WTC11 (cell line): ENCODE measurements at regions of chr16 and their contacts with region 1.

Region 1: DNA sequence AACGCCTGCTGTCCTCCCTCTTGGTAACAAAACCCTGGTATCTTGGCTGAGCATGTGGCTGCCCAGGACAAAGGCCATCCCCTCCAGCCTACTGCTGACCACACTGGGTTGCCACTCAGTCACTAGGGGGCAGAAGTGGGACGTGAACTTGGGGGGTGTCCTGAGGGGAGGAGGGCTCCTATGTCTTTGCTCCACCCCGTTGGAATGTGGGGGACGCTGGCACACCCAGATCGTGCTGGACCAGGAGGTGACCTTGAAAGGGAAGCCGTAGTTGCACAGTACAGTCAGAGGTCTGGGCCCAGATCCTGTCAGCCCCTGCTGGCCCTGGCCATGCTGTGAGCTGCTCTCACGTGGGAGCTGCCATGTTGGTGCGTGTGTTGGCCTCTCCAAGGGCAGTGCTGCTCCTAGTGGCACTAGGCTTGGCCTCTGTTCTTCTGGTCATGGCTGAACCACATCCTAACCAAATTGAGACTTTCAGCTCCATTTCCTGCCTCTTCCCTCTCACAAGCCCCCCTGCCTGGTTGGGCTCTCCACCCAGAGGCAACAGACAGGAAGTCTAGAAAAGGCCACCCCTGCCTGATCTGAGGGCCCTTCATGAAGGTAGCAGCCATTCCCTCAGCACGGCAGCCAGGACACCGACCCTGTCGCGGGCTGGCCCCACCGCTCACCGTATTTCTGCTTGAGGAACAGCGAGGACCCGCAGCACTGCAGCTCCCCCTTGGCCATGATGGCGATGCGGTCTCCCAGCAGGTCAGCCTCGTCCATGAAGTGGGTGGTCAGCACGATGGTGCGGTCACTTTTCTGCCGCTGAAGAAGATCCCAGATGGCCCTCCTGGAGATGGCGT is 29.0 kb upstream of the RNPS1 start:
- DNase-seq: peak; percentile 74
- ATAC-seq: peak; percentile 91
- H3K4me3 Mint-ChIP-seq: no peak overlapping the region
- H3K27ac Mint-ChIP-seq: no peak overlapping the region
- H3K4me1 Mint-ChIP-seq: no peaks in the 10 kb centered on the region
- H3K27me3 Mint-ChIP-seq: no peaks in the 10 kb centered on the region
- CTCF ChIP-seq: 0 out of 2 replicates have a peak, but pooled peaks have one; percentile 29

Region 2: GRCh38 chr16:2003827-2004641 is 292.8 kb before region 1 on chr16:
- CTCF ChIA-PET with region 1: no interaction called
- POLR2A ChIA-PET with region 1: no interaction called
- DNase-seq: peak; percentile 99
- ATAC-seq: peak; percentile 94
- H3K4me3 Mint-ChIP-seq: peak overlapping the region; percentile 27; the same call in 1 of the 2 replicates
- H3K27ac Mint-ChIP-seq: no peak overlapping the region
- H3K4me1 Mint-ChIP-seq: peaks cover 35% of the 10 kb centered on the region
- H3K27me3 Mint-ChIP-seq: no peaks in the 10 kb centered on the region
- CTCF ChIP-seq: peak; percentile 92

Region 3: GRCh38 chr16:2284797-2285576 is 11.9 kb before region 1 on chr16:
- CTCF ChIA-PET with region 1: interaction called, 10 read pairs
- POLR2A ChIA-PET with region 1: no interaction called
- DNase-seq: no peak
- ATAC-seq: no peak
- H3K4me3 Mint-ChIP-seq: no peak overlapping the region
- H3K27ac Mint-ChIP-seq: no peak overlapping the region
- H3K4me1 Mint-ChIP-seq: no peaks in the 10 kb centered on the region
- H3K27me3 Mint-ChIP-seq: no peaks in the 10 kb centered on the region
- CTCF ChIP-seq: no peak

Region 4: DNA sequence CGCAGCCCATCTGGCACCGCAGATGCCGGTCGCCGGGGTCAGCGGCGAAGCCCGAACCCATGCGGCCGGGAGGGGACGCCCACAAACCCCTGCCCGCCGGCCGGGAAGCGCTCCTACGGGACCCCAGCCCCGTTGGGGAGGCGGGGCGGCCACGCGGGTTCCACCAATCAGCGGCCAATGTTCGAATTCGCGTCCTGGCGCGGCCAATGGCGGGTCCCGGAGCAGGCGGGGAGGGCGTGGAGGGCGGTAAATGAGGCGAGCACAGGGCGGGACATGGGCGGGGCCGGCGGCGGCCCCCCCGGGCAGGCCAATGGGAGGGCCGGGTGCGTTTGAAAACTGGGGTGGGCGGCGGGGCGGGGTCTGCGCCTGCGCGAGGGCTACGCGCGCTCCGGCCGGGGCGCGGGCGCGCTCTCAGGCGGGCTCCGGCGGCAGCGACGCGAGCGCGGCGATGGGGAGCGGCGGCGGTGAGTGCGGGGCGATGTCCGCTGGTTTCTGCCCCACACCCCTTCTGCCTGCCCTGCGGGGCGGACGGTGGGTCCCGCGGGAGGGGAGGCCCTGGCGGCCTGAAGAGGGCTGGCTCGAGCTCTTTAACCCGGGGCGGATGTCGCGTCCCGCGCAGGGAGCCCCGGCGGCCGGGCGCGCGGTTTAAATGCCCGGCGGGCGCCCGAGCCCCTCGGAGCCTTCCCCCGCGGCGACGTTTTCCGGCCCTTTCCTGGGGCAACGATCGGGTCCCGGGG is 132.3 kb after region 1 on chr16 and contains the start of gene CCNF:
- CTCF ChIA-PET with region 1: interaction called, 10 read pairs
- POLR2A ChIA-PET with region 1: no interaction called
- DNase-seq: peak; percentile 99
- ATAC-seq: peak; percentile 92
- H3K4me3 Mint-ChIP-seq: peak within 1 kb of the TSS; percentile 99
- H3K27ac Mint-ChIP-seq: peak within 1 kb of the TSS; percentile 40
- H3K4me1 Mint-ChIP-seq: peaks cover 23% of the 10 kb centered on the region
- H3K27me3 Mint-ChIP-seq: peaks cover 11% of the 10 kb centered on the region
- CTCF ChIP-seq: no peak
- total RNA-seq, gene CCNF: 53.5 to 65.7 TPM (median 54.7 TPM) in 3 replicates